H1 (cell line): ENCODE measurements at regions of chr14 and their contacts with region 1.

Region 1: DNA sequence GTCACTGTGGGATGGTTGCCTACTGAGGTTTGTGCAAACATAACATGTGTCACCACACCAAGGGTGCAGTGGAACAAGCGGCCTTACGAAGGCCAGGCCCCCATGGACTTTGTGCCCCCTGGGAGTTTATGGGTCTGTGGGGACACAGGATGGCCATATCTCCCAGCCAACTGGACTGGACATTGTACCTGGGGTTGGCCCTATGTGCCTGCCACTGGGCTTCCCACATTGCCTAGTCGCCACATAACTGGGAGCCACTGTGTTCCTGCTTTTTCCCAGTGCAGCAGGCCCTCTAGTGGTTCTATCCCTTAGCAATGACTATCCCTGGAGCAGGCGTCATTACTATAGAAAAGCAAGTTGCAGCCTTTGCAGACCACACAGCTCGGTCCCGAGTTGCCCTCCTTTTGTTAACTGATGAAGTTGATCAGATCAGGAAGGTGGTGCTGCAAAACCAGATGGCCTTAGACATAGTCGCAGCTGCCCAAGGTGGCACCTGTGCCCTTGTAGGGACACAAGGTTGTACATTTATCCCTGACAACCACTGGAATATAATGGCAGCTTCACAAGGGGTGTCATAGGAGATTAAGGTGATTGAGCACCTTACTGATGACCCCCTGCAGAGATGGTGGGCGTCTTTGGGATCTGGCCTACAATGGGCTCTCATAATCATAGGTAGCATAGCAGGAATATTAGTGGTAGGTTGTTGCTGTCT is 15.2 kb upstream of the RNASE12 start:
- DNase-seq: peak in 1 of 2 experiments; percentile 72
- H3K4me3 ChIP-seq: no peak overlapping the region
- H3K27ac ChIP-seq: no peak overlapping the region
- H3K4me1 ChIP-seq: peaks cover 0 to 2% (median 0%) of the 10 kb centered on the region in 4 experiments; a peak in 2 of 7 replicates
- H3K27me3 ChIP-seq: no peaks in the 10 kb centered on the region
- CTCF ChIP-seq: peak; percentile 66 to 93 (median 92)
- EP300 ChIP-seq: no peak
- POLR2A ChIP-seq: no peak
- RAD21 ChIP-seq: peak; percentile 97 to 98

Region 2: GRCh38 chr14:20469242-20469889 is 137.0 kb before region 1 on chr14 and contains the start of gene PNP:
- CTCF ChIA-PET with region 1: interaction called, 19 read pairs
- POLR2A ChIA-PET with region 1: interaction called, 49 read pairs
- DNase-seq: peak; percentile 78 to 96
- H3K4me3 ChIP-seq: peak within 1 kb of the TSS; percentile 85 to 97 (median 90)
- H3K27ac ChIP-seq: peak within 1 kb of the TSS; percentile 63
- H3K4me1 ChIP-seq: peaks cover 0 to 5% (median 2%) of the 10 kb centered on the region in 4 experiments; a peak in 3 of 7 replicates
- H3K27me3 ChIP-seq: no peaks in the 10 kb centered on the region; a peak in 1 of 7 replicates
- CTCF ChIP-seq: no peak
- EP300 ChIP-seq: no peak
- POLR2A ChIP-seq: peak; percentile 99 to 100
- RAD21 ChIP-seq: no peak; a peak in 1 of 4 replicates
- total RNA-seq, gene PNP: 108 and 110 TPM in 2 replicates

Region 3: GRCh38 chr14:20477211-20477876 is 129.0 kb before region 1 on chr14:
- CTCF ChIA-PET with region 1: interaction called, 19 read pairs
- POLR2A ChIA-PET with region 1: interaction called, 4 read pairs
- DNase-seq: no peak
- H3K4me3 ChIP-seq: no peak overlapping the region
- H3K27ac ChIP-seq: no peak overlapping the region
- H3K4me1 ChIP-seq: no peaks in the 10 kb centered on the region
- H3K27me3 ChIP-seq: no peaks in the 10 kb centered on the region
- CTCF ChIP-seq: no peak
- EP300 ChIP-seq: no peak
- POLR2A ChIP-seq: 0 out of 3 replicates have a peak, but pooled peaks of 1 of the 2 experiments have one; percentile 42
- RAD21 ChIP-seq: no peak

Region 4: GRCh38 chr14:20530771-20531571 is 75.4 kb before region 1 on chr14:
- CTCF ChIA-PET with region 1: interaction called, 107 read pairs
- POLR2A ChIA-PET with region 1: no interaction called
- DNase-seq: peak; percentile 41 to 83
- H3K4me3 ChIP-seq: no peak overlapping the region
- H3K27ac ChIP-seq: no peak overlapping the region
- H3K4me1 ChIP-seq: no peaks in the 10 kb centered on the region
- H3K27me3 ChIP-seq: no peaks in the 10 kb centered on the region
- CTCF ChIP-seq: peak; percentile 20 to 78 (median 68)
- EP300 ChIP-seq: no peak
- POLR2A ChIP-seq: no peak
- RAD21 ChIP-seq: peak; percentile 60 to 71

Region 5: GRCh38 chr14:20578784-20579502 is 27.4 kb before region 1 on chr14:
- CTCF ChIA-PET with region 1: interaction called, 14 read pairs
- POLR2A ChIA-PET with region 1: no interaction called
- DNase-seq: peak in 1 of 2 experiments; percentile 47
- H3K4me3 ChIP-seq: peak overlapping the region in 1 of 4 experiments; percentile 7; a peak in 1 of 8 replicates
- H3K27ac ChIP-seq: peak overlapping the region; percentile 74
- H3K4me1 ChIP-seq: peaks cover 12 to 24% (median 16%) of the 10 kb centered on the region in 4 experiments
- H3K27me3 ChIP-seq: no peaks in the 10 kb centered on the region
- CTCF ChIP-seq: no peak
- EP300 ChIP-seq: no peak
- POLR2A ChIP-seq: no peak
- RAD21 ChIP-seq: no peak

Region 6: DNA sequence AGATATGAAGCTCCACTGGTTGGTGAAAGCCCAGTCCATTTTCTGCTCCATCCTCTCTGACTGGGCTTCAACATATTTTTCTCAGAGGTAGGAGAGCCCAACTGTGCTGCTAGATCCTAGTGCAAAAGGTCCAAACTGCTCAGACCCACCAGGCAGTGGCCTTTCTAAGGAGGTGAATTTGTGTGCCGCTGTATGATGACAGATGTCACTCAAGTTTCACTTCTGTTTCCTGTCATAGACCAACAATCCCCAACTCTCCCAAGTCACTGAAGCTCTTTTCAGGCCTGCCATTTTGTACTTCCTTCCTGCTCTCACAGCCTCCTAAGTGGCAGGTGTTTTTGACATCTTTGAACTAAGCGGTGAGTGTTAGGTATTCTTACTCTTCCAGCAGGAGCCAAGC is 61.6 kb after region 1 on chr14:
- CTCF ChIA-PET with region 1: no interaction called
- POLR2A ChIA-PET with region 1: no interaction called
- DNase-seq: no peak
- H3K4me3 ChIP-seq: no peak overlapping the region
- H3K27ac ChIP-seq: no peak overlapping the region
- H3K4me1 ChIP-seq: no peaks in the 10 kb centered on the region; a peak in 2 of 7 replicates
- H3K27me3 ChIP-seq: peaks cover 0 to 3% (median 0%) of the 10 kb centered on the region in 4 experiments; a peak in 1 of 7 replicates
- CTCF ChIP-seq: no peak
- EP300 ChIP-seq: no peak
- POLR2A ChIP-seq: no peak
- RAD21 ChIP-seq: no peak

Region 7: GRCh38 chr14:20697273-20698017 is 91.1 kb after region 1 on chr14:
- CTCF ChIA-PET with region 1: no interaction called
- POLR2A ChIA-PET with region 1: no interaction called
- DNase-seq: peak in 1 of 2 experiments; percentile 77
- H3K4me3 ChIP-seq: no peak overlapping the region
- H3K27ac ChIP-seq: no peak overlapping the region
- H3K4me1 ChIP-seq: no peaks in the 10 kb centered on the region; a peak in 1 of 7 replicates
- H3K27me3 ChIP-seq: no peaks in the 10 kb centered on the region
- CTCF ChIP-seq: peak; percentile 76 to 90 (median 87)
- EP300 ChIP-seq: no peak
- POLR2A ChIP-seq: no peak
- RAD21 ChIP-seq: peak; percentile 97 to 98